Ascending aorta (tissue), 2 donors: ENCODE measurements at regions of chr1 and their contacts with region 1.

Region 1: GRCh38 chr1:147273409-147274336 is 31.2 kb downstream of the CHD1L start:
- DNase-seq: no peak
- H3K4me3 ChIP-seq: peak overlapping the region in 1 of 2 donors; percentile 20
- H3K27ac ChIP-seq: peak overlapping the region; percentile 23 to 50
- H3K4me1 ChIP-seq: peaks cover 4 to 11% of the 10 kb centered on the region in 2 donors
- H3K27me3 ChIP-seq: no peaks in the 10 kb centered on the region
- CTCF ChIP-seq: peak; percentile 33 to 56 (median 42)

Region 2: DNA sequence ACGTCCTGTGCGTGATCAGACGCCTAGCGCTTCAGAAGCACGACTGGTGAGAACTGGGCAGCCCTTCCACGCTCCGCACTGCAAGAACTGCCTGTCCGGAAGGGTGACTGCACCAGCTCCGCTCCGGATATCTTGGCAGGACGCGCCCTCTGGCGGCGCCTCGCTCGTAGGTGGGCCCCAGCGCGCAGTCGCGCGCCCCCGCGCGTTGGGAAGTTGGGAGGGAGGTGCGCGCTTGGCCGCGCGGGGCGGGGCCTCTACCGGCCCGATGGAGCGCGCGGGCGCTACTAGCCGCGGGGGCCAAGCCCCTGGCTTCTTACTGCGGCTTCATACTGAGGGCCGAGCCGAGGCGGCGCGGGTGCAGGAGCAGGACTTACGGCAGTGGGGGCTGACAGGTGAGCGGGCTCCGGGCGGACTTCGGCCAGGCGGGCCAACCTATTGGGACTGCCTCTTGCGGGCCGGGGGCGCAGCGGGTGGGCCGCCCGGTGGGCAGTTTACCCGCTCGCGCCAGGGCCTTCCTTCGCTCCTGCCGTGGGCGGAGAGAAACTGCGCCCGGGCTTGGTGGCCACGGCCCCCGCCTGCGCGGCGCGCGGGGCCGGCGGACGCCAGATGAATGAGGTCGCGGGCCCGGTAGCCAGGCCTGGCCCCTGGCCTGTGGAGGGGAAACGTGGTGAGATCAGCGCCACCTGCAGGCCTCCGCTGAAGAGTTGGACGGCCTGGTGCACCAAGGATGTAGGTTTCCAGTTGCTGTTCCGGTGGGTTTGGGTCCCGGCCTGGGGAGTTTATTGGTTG is 31.0 kb before region 1 on chr1 and contains the start of gene CHD1L:
- intact Hi-C with region 1: loop called (anchors 2 kb)
- DNase-seq: peak; percentile 81 to 98
- H3K4me3 ChIP-seq: peak within 1 kb of the TSS; percentile 68 to 91
- H3K27ac ChIP-seq: peak within 1 kb of the TSS; percentile 96 to 98
- H3K4me1 ChIP-seq: peaks cover 0 to 3% of the 10 kb centered on the region in 2 donors
- H3K27me3 ChIP-seq: no peaks in the 10 kb centered on the region
- CTCF ChIP-seq: peak; percentile 79 to 96 (median 85)
- total RNA-seq, gene CHD1L: 8.0 TPM

Region 3: DNA sequence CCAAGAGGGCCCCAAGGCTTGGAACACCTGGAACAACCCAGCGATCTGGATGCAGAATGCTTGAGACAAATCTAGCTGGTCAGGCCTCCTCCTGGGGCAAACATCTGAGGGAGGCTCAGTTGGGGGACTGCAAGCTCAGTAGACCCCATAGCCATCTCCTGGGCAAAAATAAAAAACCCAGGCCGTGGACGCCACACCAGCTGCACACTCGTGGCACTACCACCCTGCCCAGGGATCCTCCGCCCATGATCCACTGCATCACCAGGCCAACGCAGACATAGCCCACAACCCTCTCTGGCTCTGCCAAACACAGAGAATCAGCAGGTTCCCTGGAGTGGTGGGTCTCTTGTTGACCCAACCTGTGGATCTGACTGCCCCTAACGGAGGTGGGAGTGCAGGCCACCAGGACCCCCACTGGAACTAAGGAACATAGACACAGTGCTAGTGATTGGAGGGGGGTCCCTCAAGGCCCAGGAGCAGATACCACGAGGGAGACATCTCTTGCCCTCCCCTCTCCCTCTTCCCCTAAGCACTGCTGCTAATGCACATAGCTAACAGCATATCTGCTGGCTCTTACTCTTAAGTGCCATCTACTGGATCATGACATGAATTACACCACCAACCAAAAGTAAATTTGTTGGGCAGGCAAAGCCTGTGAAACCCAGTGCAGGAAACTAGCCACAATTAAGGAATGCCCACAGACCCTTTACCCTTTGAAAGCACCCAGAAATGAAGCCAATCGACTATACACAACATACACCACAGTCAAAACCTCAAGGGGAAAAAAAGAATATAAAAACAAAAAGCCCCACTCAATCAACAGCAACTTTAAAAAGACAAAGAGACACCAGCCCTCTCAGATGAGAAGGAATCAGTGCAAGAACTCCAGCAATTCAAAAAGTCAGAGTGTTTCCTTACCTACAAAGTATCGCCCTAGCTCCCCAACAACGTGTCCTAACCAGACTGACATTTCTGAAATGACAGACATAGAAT is 116.2 kb after region 1 on chr1:
- intact Hi-C with region 1: loop called (anchors 1 kb)
- DNase-seq: no peak
- H3K4me3 ChIP-seq: no peak overlapping the region
- H3K27ac ChIP-seq: no peak overlapping the region
- H3K4me1 ChIP-seq: no peaks in the 10 kb centered on the region
- H3K27me3 ChIP-seq: no peaks in the 10 kb centered on the region
- CTCF ChIP-seq: peak; percentile 45 to 69 (median 63)

Region 4: GRCh38 chr1:147472966-147473734 is 199.5 kb after region 1 on chr1:
- intact Hi-C with region 1: no loop called
- DNase-seq: no peak
- H3K4me3 ChIP-seq: no peak overlapping the region
- H3K27ac ChIP-seq: no peak overlapping the region
- H3K4me1 ChIP-seq: no peaks in the 10 kb centered on the region
- H3K27me3 ChIP-seq: no peaks in the 10 kb centered on the region
- CTCF ChIP-seq: no peak

Region 5: GRCh38 chr1:147494998-147495580 is 221.4 kb after region 1 on chr1:
- intact Hi-C with region 1: loop called (anchors 5 kb)
- DNase-seq: peak; percentile 19 to 86
- H3K4me3 ChIP-seq: no peak overlapping the region
- H3K27ac ChIP-seq: no peak overlapping the region
- H3K4me1 ChIP-seq: no peaks in the 10 kb centered on the region
- H3K27me3 ChIP-seq: no peaks in the 10 kb centered on the region
- CTCF ChIP-seq: peak; percentile 76 to 93 (median 86)

Region 6: GRCh38 chr1:147640553-147641165 is 367.0 kb after region 1 on chr1:
- intact Hi-C with region 1: loop called (anchors 5 kb)
- DNase-seq: peak in 1 of 2 donors; percentile 71
- H3K4me3 ChIP-seq: no peak overlapping the region
- H3K27ac ChIP-seq: no peak overlapping the region
- H3K4me1 ChIP-seq: no peaks in the 10 kb centered on the region
- H3K27me3 ChIP-seq: no peaks in the 10 kb centered on the region
- CTCF ChIP-seq: peak; percentile 16 to 58 (median 57)